ENCODE measurements at regions of chrX and their contacts with region 1.

Region 1: GRCh38 chrX:39309018-39309635 is 507.9 kb downstream of the MID1IP1 start:
- DNase-seq: peak; percentile 77
- ATAC-seq: peak; percentile 86
- H3K4me3 Mint-ChIP-seq: peak overlapping the region; percentile 51
- H3K27ac Mint-ChIP-seq: peak overlapping the region; percentile 100
- H3K4me1 Mint-ChIP-seq: peaks cover 77% of the 10 kb centered on the region
- H3K27me3 Mint-ChIP-seq: no peaks in the 10 kb centered on the region

Region 2: DNA sequence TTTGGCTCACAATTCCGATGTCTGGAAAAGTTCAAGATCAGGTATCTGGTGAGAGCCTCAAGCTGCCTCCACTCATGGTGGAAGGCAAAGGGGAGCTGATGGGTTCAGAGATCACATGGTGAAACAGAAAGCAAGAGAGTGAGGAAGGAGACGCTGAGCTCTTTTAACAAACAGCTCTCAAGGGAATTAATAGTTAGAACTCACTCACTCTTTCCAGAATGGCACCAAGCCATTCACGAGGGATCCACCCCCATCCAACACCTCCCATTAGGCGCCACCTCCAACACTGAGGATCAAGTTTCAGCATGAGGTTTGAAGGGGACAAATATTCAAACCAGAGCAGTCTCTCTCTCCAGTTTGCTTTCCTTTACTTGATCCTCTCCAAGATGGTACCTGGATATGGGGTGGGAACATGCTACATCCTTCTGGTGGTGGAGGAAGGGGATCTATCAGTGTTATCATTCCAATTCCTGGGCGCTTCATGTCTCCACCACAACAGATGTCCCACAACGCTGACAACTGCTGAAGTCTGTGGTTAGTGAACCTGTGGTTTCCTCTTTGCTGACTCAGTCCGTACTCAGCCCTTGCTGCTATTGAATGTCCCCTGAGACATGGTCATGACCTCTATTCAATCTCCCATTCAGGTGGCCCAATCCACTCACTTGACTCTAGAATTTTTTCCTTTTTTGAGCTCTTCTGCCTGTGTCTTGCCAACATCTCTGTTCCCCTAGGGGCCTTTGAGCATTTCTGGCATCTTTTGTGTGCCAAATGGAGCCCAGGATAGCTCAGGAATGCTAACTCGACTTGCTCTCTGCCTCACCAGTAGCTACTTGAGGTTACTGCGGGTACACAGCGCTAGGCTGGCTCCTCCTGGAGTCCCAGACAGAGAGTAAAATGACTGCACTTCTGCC is 112.7 kb before region 1 on chrX:
- CTCF ChIA-PET with region 1: no interaction called
- POLR2A ChIA-PET with region 1: no interaction called
- intact Hi-C with region 1: loop called in 1 of 2 experiments (anchors 5 kb)
- DNase-seq: peak; percentile 69
- ATAC-seq: peak; percentile 85
- H3K4me3 Mint-ChIP-seq: peak overlapping the region; percentile 44
- H3K27ac Mint-ChIP-seq: peak overlapping the region; percentile 76
- H3K4me1 Mint-ChIP-seq: peaks cover 47% of the 10 kb centered on the region
- H3K27me3 Mint-ChIP-seq: peaks cover 2% of the 10 kb centered on the region

Region 3: GRCh38 chrX:39268207-39268606 is 40.9 kb before region 1 on chrX:
- CTCF ChIA-PET with region 1: no interaction called
- POLR2A ChIA-PET with region 1: no interaction called
- intact Hi-C with region 1: loop called (anchors 2 kb)
- DNase-seq: no peak
- ATAC-seq: peak; percentile 74
- H3K4me3 Mint-ChIP-seq: peak overlapping the region; percentile 23
- H3K27ac Mint-ChIP-seq: peak overlapping the region; percentile 87
- H3K4me1 Mint-ChIP-seq: peaks cover 57% of the 10 kb centered on the region
- H3K27me3 Mint-ChIP-seq: no peaks in the 10 kb centered on the region

Region 4: GRCh38 chrX:39409246-39409917 is 100.3 kb after region 1 on chrX:
- CTCF ChIA-PET with region 1: no interaction called
- POLR2A ChIA-PET with region 1: no interaction called
- intact Hi-C with region 1: no loop called
- DNase-seq: peak; percentile 33
- ATAC-seq: peak; percentile 90
- H3K4me3 Mint-ChIP-seq: no peak overlapping the region
- H3K27ac Mint-ChIP-seq: no peak overlapping the region
- H3K4me1 Mint-ChIP-seq: peaks cover 10% of the 10 kb centered on the region
- H3K27me3 Mint-ChIP-seq: no peaks in the 10 kb centered on the region

Region 5: DNA sequence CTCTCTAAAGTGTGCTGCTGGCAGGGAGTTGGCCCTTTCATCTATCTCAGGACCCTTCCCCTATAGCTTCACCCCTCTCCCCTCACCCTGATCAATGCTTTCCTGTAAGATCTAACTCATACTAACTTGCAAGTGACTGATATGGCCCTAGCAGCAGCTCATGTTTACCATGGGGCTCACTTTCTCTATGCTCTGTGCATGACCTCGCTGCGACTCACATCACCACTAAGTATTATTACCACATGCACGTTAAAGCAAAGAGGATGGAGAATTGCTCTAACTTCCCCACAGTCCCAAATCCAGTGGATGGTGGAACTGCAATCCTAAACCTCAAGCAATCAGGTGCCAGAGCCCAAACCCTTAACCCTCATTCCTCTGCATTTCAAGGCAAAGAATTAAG is 118.8 kb after region 1 on chrX:
- CTCF ChIA-PET with region 1: interaction called, 3 read pairs
- POLR2A ChIA-PET with region 1: interaction called, 3 read pairs
- intact Hi-C with region 1: loop called (anchors 1 to 2 kb)
- DNase-seq: peak; percentile 73
- ATAC-seq: peak; percentile 71
- H3K4me3 Mint-ChIP-seq: no peak overlapping the region
- H3K27ac Mint-ChIP-seq: peak overlapping the region; percentile 82
- H3K4me1 Mint-ChIP-seq: peaks cover 73% of the 10 kb centered on the region
- H3K27me3 Mint-ChIP-seq: no peaks in the 10 kb centered on the region

Measured in activated CD4-positive, alpha-beta T cell treated with anti-CD3 and anti-CD28 coated beads for 36 hours (primary cell).